Activated T-helper 1 cell treated with anti-CD3 and anti-CD28 coated beads, Interleukin-12 subunit alpha, Interleukin-12 subunit beta, Interleukin-2, Interleukin-4 antibody, amounts not matched to agents 30 ng/mL and 10 ng/mL and 1 ng/mL, durations not matched to agents 14 hours and 24 hours and 36 hours (primary cell): ENCODE measurements at regions of chr7 and their contacts with region 1.

Region 1: DNA sequence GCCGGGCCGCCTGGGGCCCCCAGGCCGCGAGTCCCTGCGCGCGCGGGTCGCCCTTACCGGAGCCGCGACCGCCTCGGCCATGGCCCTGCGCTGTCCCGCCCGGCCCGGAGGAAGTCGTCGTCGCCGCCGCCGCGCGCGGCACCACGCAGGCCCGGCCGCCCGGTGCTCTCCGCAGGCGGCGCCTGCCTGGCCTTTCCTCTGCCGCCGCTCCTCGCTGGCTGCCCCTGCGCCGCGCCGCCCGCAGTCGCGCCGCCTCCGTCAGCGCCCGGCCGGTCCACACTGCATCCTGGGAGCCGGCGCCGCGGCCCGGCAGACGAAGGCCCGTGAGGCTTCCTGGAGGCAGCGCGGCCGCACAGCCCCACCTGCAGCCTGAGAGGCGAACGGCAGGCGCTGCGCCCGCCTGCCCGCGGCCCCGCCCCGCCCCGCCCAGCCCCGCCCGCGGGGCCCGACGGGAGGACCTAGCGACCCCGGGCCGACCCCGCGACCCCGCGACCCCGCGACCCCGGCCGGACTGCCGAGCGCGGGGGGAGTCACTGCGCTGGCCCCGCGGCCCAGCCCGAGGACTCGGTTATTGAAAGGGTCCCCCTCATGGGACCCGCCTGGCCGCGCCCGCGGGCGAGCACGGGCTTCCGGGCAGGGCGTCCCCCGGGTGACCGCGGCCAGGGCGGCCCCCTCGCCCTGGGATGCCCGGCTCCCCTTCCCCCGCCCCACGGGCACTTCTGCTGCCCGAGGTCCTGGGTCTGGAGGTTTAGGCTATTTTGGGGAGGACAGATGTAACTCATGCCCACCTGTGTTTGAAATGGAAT is at the start of gene ZNF746:
- DNase-seq: peak; percentile 78
- H3K4me3 Mint-ChIP-seq: peak within 1 kb of the TSS; percentile 99
- H3K27ac Mint-ChIP-seq: peak within 1 kb of the TSS; percentile 96
- H3K4me1 Mint-ChIP-seq: peaks cover 43% of the 10 kb centered on the region
- H3K27me3 Mint-ChIP-seq: no peaks in the 10 kb centered on the region
- total RNA-seq, gene ZNF746: 27.7 and 28.1 TPM in 2 replicates

Region 2: DNA sequence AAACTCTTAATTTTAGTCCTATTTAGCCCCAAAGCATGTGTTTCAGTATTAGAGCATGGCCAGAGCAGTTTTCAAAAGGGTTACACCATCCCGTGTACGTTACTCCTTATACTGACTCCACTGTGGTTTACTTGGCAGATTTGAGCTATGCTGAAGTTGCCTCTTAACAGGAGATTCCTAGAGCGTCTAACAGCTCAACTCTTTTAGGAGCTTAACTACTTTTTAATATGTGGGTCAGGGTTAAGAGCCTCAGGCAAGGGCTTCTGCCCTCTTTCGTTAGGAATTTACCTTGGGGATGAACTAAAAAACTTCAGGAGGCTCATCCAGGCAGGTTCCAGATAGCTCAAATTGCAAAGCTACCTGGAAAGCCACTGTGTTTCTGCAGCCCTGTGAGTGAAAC is 1581.9 kb before region 1 on chr7:
- intact Hi-C with region 1: no loop called
- DNase-seq: no peak
- H3K4me3 Mint-ChIP-seq: no peak overlapping the region
- H3K27ac Mint-ChIP-seq: no peak overlapping the region
- H3K4me1 Mint-ChIP-seq: no peaks in the 10 kb centered on the region
- H3K27me3 Mint-ChIP-seq: no peaks in the 10 kb centered on the region

Region 3: GRCh38 chr7:148987010-148987750 is 510.5 kb before region 1 on chr7:
- intact Hi-C with region 1: loop called (anchors 5 kb)
- DNase-seq: peak; percentile 78
- H3K4me3 Mint-ChIP-seq: peak overlapping the region; percentile 94
- H3K27ac Mint-ChIP-seq: peak overlapping the region; percentile 92
- H3K4me1 Mint-ChIP-seq: peaks cover 46% of the 10 kb centered on the region
- H3K27me3 Mint-ChIP-seq: peaks cover 21% of the 10 kb centered on the region

Region 4: DNA sequence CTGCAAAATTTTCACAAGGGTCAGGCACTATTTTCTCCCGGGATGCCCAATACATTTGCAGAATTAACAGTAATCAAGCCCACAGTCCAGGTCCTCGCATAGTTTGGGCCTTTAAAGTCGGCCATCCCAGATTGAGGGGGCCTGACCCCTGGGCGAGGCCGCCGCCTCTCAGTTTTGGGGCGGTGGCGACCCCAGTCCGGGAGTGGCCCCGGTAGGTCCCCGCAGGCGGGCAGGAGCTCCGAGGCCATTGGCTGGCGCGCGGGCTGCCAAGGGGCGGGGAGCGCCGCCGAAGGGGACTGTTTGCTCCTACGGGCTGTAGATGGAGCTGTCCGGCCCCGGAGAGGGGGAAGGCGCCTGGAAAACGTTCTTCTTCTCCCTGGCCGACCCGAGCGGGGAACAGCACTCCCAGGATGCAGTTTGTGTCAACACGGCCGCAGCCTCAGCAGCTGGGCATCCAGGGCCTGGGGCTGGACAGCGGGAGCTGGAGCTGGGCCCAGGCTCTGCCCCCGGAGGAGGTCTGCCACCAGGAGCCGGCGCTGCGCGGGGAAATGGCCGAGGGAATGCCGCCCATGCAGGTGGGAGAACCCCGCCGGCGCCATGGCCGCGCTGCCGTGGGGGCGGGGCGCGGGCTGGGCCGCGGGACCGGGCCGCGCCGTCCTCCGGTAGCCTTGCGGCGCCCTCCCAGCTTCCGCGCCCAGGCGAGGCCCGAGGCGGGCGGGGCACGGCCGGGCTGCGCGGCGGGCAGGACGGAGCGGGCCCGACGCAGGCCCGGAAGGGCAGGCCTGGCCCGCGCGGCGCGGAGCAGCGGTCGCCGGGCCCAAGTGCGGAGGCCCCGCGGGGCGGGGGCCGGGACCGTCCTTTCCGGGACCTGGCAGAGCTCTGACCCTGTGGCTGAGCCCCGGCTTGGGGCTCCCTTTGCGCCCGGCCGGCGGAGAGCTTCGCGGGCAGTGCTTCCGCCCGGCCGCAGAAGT is 302.2 kb before region 1 on chr7 and contains the start of gene ZNF282:
- intact Hi-C with region 1: loop called (anchors 5 kb)
- DNase-seq: peak; percentile 73
- H3K4me3 Mint-ChIP-seq: peak within 1 kb of the TSS; percentile 90
- H3K27ac Mint-ChIP-seq: peak within 1 kb of the TSS; percentile 90
- H3K4me1 Mint-ChIP-seq: peaks cover 55% of the 10 kb centered on the region
- H3K27me3 Mint-ChIP-seq: peaks cover 3% of the 10 kb centered on the region
- total RNA-seq, gene ZNF282: 49.4 and 55.8 TPM in 2 replicates

Region 5: DNA sequence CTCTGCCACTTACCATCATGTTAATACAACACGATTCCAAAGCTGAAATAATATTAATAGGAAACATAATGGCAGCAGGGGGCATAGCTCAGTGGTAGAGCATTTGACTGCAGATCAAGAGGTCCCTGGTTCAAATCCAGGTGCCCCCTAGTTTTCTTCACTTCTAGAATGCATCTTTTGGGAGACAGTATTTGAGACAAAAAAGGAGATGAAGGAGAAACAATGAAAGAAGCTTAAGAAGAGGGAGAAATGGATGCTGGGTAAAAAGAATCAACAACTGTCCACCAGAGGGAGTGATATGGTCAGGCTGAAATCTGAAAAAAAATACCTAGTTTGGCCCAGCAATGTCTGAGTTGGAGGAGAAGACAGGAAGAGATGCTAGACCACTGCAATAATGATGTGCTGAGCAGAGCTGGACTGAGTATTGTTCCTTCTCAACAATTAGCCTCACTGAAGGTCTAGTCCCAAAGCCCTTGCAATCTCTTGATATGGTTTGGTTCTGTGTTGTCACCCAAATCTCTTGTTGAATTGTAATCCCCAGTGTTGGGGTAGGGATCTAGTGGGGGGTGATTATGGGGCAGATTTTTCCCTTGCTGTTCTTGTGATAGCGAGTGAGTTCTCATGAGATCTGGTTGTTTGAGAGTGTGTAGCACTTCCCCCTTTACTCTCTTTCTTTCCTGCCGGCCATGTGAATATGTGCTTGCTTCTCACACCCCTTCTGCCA is 187.4 kb before region 1 on chr7:
- intact Hi-C with region 1: loop called (anchors 10 kb)
- DNase-seq: no peak
- H3K4me3 Mint-ChIP-seq: no peak overlapping the region
- H3K27ac Mint-ChIP-seq: no peak overlapping the region
- H3K4me1 Mint-ChIP-seq: no peaks in the 10 kb centered on the region
- H3K27me3 Mint-ChIP-seq: peaks cover 13% of the 10 kb centered on the region

Region 6: GRCh38 chr7:149598721-149599306 is 101.2 kb after region 1 on chr7:
- intact Hi-C with region 1: loop called (anchors 2 kb)
- DNase-seq: peak; percentile 9
- H3K4me3 Mint-ChIP-seq: no peak overlapping the region
- H3K27ac Mint-ChIP-seq: no peak overlapping the region
- H3K4me1 Mint-ChIP-seq: peaks cover 32% of the 10 kb centered on the region
- H3K27me3 Mint-ChIP-seq: peaks cover 4% of the 10 kb centered on the region

Region 7: DNA sequence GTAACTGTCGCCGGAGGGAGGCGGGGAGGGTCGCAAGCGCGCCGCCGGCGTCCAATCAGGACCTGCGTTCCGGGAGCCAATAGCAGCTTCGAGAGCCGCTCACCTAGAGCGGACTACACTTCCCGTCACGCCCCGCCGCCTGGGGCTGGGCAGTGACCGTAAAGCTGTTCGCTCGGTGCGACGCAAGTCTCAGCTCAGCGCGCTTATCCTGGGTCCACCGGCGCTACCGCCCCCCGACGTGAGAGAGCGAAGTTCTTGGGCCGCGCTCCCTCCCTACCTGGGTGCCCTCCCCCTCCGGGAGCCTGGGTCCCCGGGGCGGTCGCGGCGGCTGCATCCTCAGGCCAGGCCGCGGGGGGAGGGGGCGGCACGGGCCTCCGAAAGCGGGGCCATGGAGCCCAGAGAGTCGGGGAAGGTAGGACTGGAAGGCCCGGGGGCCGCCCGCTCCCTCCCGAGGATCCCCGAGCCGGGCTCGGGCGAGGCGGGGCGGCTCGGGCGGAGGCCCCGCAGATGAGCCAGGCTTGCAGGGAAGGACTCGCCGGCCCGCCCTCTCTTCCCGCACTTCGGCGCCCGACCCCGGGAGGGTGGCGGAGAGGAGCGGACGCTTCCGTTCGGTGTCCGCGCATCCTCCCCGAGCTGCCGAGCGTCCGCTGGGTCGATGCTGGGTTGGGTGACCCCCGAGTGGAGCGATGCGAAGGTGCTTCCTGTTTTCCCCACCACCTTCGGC is 340.7 kb after region 1 on chr7 and contains the start of gene ZNF862:
- intact Hi-C with region 1: loop called (anchors 1 kb)
- DNase-seq: peak; percentile 95
- H3K4me3 Mint-ChIP-seq: peak within 1 kb of the TSS; percentile 89
- H3K27ac Mint-ChIP-seq: peak within 1 kb of the TSS; percentile 75
- H3K4me1 Mint-ChIP-seq: peaks cover 25% of the 10 kb centered on the region
- H3K27me3 Mint-ChIP-seq: peaks cover 9% of the 10 kb centered on the region
- total RNA-seq, gene ZNF862: 14.2 and 19.3 TPM in 2 replicates